ENCODE measurements at regions of chr1 and their contacts with region 1.

Region 1: DNA sequence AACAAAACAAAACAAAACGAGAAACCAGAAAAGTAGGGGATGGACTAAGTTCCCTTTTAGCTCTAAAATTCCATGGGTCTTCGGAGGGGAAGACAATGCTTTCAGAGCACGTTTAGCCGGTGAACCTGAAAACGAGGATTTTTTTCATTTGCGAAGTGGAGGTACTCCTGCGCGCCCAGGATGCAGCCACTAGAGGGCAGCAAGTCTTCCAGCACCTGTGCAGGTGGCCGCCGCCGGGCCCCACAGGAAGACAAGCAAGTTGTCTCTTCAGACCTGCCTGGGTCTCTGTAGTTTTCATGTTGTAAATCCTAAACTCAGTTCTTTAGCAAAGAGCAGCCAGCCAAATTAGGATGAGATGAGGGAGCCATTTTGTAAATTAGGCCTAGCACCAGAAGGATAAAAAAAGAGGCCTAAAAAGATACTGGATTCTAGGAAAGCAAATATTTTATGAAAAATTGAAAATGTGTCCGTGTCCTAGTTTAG is 17.7 kb upstream of the SNX27 start:
- DNase-seq: peak; percentile 79 to 87
- ATAC-seq: peak; percentile 62
- H3K4me3 ChIP-seq: no peak overlapping the region
- H3K27ac ChIP-seq: no peak overlapping the region
- H3K4me1 ChIP-seq: no peaks in the 10 kb centered on the region
- H3K27me3 ChIP-seq: no peaks in the 10 kb centered on the region

Region 2: DNA sequence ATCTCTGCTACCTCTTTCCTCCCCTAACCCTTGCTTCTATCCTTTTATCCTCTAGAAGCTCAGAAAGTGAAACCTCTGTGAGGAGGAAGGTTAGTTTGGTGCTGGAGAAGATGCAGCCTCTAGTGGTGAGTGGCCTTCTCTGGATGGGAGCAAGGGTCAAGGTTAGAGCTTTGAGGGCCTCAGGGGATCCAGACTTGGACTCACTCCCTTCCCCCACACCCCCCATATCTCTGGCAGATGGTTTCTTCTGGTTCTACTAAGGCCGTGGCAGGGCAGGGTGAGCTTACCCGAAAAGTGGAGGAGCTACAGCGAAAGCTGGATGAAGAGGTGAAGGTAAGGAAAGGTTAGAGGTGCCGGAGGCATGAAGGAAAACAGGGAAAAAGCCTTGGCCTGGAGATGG is 73.8 kb before region 1 on chr1:
- intact Hi-C with region 1: no loop called
- DNase-seq: peak in 1 of 2 donors; percentile 9
- ATAC-seq: no peak
- H3K4me3 ChIP-seq: no peak overlapping the region
- H3K27ac ChIP-seq: no peak overlapping the region
- H3K4me1 ChIP-seq: no peaks in the 10 kb centered on the region
- H3K27me3 ChIP-seq: no peaks in the 10 kb centered on the region

Region 3: DNA sequence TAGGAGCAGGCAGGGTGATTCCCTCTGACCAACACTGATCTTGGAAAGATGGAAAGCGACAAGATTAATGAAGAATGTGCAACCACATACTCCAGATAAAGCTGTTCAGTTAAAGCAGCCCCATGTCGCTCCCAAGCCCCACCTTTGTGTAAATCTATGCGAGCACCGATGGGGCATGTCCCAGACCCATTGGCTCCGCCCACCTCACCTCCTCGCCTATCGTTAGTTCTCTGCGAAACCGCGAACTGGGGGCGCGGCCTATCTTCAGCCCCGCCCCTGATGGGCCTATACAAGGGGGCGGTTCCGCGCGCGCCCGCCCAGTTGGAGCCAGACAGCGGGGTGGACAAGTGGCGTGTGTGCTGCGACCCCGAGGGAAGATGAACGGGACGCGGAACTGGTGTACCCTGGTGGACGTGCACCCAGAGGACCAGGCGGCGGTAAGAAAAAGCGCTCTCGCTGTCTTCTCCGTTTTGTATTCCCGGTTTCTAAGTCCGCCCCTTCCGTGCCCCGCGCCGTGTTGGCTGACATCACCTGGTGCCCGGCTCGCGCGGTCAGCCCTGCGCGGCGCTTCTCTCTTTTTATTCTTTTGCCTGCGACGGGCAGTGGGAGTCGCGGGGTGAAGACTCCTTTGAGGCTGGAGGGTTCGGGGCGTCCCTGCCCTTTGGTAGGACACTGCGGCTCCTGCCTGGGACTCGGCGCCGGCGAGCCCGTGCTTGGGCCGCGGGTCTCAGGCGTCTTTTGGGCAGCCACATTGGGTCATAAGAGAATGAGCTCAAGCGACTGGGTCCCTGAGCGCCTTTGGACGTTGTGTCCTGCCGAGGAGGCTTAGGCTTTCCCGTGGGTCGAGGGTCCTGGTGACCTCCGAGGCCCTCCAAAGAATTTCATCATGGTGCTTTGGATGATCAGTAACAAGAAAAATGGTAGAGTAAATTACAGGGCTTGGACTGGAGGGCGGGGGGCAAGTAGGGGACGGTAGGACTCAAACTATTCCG is 53.9 kb before region 1 on chr1 and contains the start of gene TUFT1:
- intact Hi-C with region 1: loop called in 1 of 2 experiments (anchors 10 kb)
- DNase-seq: peak; percentile 96 to 97
- ATAC-seq: peak; percentile 95
- H3K4me3 ChIP-seq: peak within 1 kb of the TSS; percentile 51
- H3K27ac ChIP-seq: peak within 1 kb of the TSS in 1 of 2 donors; percentile 23
- H3K4me1 ChIP-seq: no peaks in the 10 kb centered on the region
- H3K27me3 ChIP-seq: no peaks in the 10 kb centered on the region
- total RNA-seq, gene TUFT1: 6.5 to 11.2 TPM

Region 4: DNA sequence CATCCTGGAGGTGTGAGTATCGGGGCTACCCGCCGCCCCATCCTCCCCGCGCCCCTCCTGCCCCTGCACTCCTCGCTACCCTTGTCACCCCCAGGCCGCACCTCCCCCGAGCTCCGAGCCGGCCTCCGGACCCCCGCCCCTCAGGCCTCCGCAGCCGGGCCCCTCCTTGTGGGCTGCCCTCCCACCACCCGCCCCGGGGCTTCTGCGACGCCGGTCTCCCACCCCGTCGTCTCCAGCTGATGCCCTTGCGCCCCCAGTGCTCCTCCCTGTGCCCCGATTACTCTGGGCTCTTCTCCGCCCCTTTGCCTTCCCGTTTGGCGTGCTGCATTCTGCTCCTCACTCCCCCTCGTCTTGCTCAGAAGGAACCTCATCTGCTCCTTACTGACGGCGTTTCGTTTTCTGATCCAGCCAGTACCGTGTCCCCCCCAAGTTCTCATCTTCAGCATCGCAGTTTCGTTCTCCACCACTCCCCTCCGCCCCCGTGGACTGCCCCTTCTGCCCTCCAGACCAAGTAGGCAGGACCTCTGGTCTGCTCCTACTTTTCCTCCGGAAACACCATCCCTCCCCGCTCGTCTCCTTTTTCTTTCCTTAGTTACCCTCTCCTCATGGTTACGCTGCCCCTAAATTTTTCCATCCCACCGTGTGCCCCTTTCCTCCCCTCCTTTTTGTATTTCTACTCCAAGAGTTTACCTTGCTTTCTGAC is 18.5 kb after region 1 on chr1:
- intact Hi-C with region 1: no loop called
- DNase-seq: peak; percentile 59 to 76
- ATAC-seq: peak; percentile 42
- H3K4me3 ChIP-seq: peak overlapping the region; percentile 61 to 84
- H3K27ac ChIP-seq: no peak overlapping the region
- H3K4me1 ChIP-seq: peaks cover 0 to 3% of the 10 kb centered on the region in 2 donors
- H3K27me3 ChIP-seq: no peaks in the 10 kb centered on the region

Region 5: GRCh38 chr1:151739590-151740375 is 145.6 kb after region 1 on chr1:
- intact Hi-C with region 1: loop called (anchors 1 to 2 kb)
- DNase-seq: no peak
- ATAC-seq: no peak
- H3K4me3 ChIP-seq: no peak overlapping the region
- H3K27ac ChIP-seq: no peak overlapping the region
- H3K4me1 ChIP-seq: no peaks in the 10 kb centered on the region
- H3K27me3 ChIP-seq: no peaks in the 10 kb centered on the region